ENCODE measurements at regions of chr3 and their contacts with region 1.

Region 1: GRCh38 chr3:16378920-16379319 is 113.9 kb downstream of the OXNAD1 start:
- DNase-seq: no peak
- ATAC-seq: no peak

Region 2: DNA sequence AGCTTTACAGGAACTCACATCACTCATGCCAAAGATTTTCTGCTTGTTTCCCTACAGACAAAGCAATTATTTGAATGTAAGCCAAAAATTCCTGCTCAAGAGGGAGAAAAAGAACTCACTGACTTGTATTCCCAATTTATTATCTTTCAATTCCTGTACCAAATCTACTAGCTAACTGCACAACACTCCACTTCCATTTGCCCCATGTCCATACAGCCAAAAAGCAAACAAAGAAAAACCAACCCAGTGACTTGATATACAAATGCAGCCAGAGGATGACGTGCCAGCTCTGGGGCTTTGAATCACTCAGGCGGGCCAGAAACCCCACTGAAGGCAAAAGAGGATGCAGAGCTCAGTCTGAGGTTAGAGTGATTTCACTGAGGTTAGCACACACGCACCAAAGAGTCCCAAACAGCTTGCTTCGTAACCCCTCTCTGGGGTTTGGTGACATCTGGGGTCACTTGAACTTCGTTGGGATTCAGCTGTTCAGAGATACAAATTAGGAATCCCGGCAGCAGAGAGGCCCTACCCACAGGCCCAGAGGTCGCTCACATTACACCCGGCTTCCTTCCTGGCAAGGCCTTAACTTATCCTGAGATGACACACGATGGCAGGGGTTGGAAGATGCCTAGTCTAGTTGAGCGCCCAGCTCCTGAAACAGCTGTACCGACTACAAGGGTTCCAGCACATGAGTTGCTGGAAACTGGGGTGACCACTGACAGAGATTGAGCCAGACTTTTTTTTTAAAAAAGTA is 132.9 kb after region 1 on chr3:
- intact Hi-C with region 1: loop called (anchors 10 kb)
- DNase-seq: peak; percentile 80
- ATAC-seq: peak; percentile 47